Mammary epithelial cell (primary cell): ENCODE measurements at regions of chrX and their contacts with region 1.

Region 1: GRCh38 chrX:118807151-118808017 is 16.2 kb upstream of the ZCCHC12 start:
- DNase-seq: peak; percentile 29
- H3K4me3 ChIP-seq: no peak overlapping the region
- H3K27ac ChIP-seq: no peak overlapping the region
- H3K4me1 ChIP-seq: no peaks in the 10 kb centered on the region
- H3K27me3 ChIP-seq: peaks cover 2% of the 10 kb centered on the region
- CTCF ChIP-seq: peak; percentile 69 to 78

Region 2: GRCh38 chrX:118637997-118638396 is 169.4 kb before region 1 on chrX:
- CTCF ChIA-PET with region 1: no interaction called
- dilution Hi-C with region 1: loop called (anchors 25 kb)
- in situ Hi-C with region 1: loop called (anchors 5 to 10 kb)
- intact Hi-C with region 1: loop called (anchors 1 kb)
- DNase-seq: no peak
- H3K4me3 ChIP-seq: no peak overlapping the region
- H3K27ac ChIP-seq: no peak overlapping the region
- H3K4me1 ChIP-seq: no peaks in the 10 kb centered on the region
- H3K27me3 ChIP-seq: no peaks in the 10 kb centered on the region
- CTCF ChIP-seq: peak in 1 of 2 donors; percentile 42

Region 3: GRCh38 chrX:118679290-118679689 is 128.1 kb before region 1 on chrX:
- CTCF ChIA-PET with region 1: no interaction called
- dilution Hi-C with region 1: no loop called
- in situ Hi-C with region 1: no loop called
- intact Hi-C with region 1: no loop called
- DNase-seq: no peak
- H3K4me3 ChIP-seq: no peak overlapping the region
- H3K27ac ChIP-seq: no peak overlapping the region
- H3K4me1 ChIP-seq: no peaks in the 10 kb centered on the region
- H3K27me3 ChIP-seq: no peaks in the 10 kb centered on the region
- CTCF ChIP-seq: peak in 1 of 2 donors; percentile 4

Region 4: GRCh38 chrX:118761939-118762707 is 45.3 kb before region 1 on chrX:
- CTCF ChIA-PET with region 1: no interaction called
- dilution Hi-C with region 1: no loop called
- in situ Hi-C with region 1: no loop called
- intact Hi-C with region 1: loop called (anchors 1 kb)
- DNase-seq: no peak
- H3K4me3 ChIP-seq: no peak overlapping the region
- H3K27ac ChIP-seq: no peak overlapping the region
- H3K4me1 ChIP-seq: no peaks in the 10 kb centered on the region
- H3K27me3 ChIP-seq: no peaks in the 10 kb centered on the region
- CTCF ChIP-seq: peak in 1 of 2 donors; percentile 34